CD4-positive, alpha-beta T cell (primary cell): ENCODE measurements at regions of chr2 and their contacts with region 1.

Region 1: GRCh38 chr2:157538064-157538463 is 90.6 kb downstream of the ACVR1C start:
- DNase-seq: no peak
- ATAC-seq: no peak
- H3K4me3 ChIP-seq: no peak overlapping the region
- H3K4me3 Mint-ChIP-seq: no peak overlapping the region
- H3K27ac ChIP-seq: no peak overlapping the region
- H3K27ac Mint-ChIP-seq: no peak overlapping the region
- H3K4me1 ChIP-seq: no peaks in the 10 kb centered on the region
- H3K4me1 Mint-ChIP-seq: no peaks in the 10 kb centered on the region
- H3K27me3 ChIP-seq: no peaks in the 10 kb centered on the region
- H3K27me3 Mint-ChIP-seq: no peaks in the 10 kb centered on the region
- CTCF ChIP-seq: no peak

Region 2: GRCh38 chr2:157587576-157587975 is 49.5 kb after region 1 on chr2:
- CTCF ChIA-PET with region 1: no interaction called
- POLR2A ChIA-PET with region 1: no interaction called
- intact Hi-C with region 1: loop called in 1 of 2 experiments (anchors 10 kb)
- DNase-seq: no peak
- ATAC-seq: no peak
- H3K4me3 ChIP-seq: no peak overlapping the region
- H3K4me3 Mint-ChIP-seq: no peak overlapping the region
- H3K27ac ChIP-seq: no peak overlapping the region
- H3K27ac Mint-ChIP-seq: no peak overlapping the region
- H3K4me1 ChIP-seq: no peaks in the 10 kb centered on the region
- H3K4me1 Mint-ChIP-seq: peaks cover under 1% of the 10 kb centered on the region
- H3K27me3 ChIP-seq: no peaks in the 10 kb centered on the region
- H3K27me3 Mint-ChIP-seq: no peaks in the 10 kb centered on the region
- CTCF ChIP-seq: no peak

Region 3: GRCh38 chr2:157620956-157621355 is 82.9 kb after region 1 on chr2:
- CTCF ChIA-PET with region 1: no interaction called
- POLR2A ChIA-PET with region 1: no interaction called
- intact Hi-C with region 1: no loop called
- DNase-seq: no peak
- ATAC-seq: no peak
- H3K4me3 ChIP-seq: no peak overlapping the region
- H3K4me3 Mint-ChIP-seq: no peak overlapping the region
- H3K27ac ChIP-seq: no peak overlapping the region
- H3K27ac Mint-ChIP-seq: no peak overlapping the region
- H3K4me1 ChIP-seq: peaks cover 8% of the 10 kb centered on the region
- H3K4me1 Mint-ChIP-seq: peaks cover 20% of the 10 kb centered on the region
- H3K27me3 ChIP-seq: no peaks in the 10 kb centered on the region
- H3K27me3 Mint-ChIP-seq: no peaks in the 10 kb centered on the region
- CTCF ChIP-seq: no peak

Region 4: DNA sequence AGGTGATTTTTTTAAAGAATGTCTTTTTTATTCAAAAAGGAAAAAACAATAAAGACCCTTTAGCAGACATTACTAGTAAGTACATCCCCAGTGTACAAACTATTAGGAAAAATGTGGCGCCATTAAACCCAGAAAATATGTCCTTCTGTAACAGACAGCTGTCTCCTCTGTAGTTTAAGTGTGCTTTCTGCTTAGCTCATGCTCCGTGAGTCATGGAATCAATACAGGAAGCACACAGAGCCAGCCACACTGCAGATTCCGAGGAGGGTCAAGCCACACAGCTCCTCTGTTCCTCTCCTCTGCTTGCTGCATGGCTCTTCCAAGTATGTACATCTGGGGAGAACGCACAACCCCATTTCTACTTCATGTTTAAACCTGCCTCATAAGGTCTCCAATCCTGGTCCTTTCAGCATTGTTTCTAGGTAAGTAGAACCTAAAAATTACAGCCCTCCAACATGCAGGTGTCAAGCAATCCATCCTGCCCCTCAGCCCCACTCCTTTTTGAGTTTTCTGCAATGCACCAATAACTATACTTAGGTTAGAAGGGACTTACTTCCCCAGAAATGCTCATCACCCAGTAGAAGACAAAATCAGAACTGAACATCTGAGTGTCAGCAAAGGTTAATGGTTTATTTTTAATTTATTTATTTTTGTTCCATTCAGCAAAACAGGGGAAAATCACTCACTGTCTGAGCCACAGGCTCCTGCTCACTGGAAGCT is 300.5 kb after region 1 on chr2:
- CTCF ChIA-PET with region 1: no interaction called
- POLR2A ChIA-PET with region 1: no interaction called
- intact Hi-C with region 1: no loop called
- DNase-seq: peak in 4 of 14 experiments; percentile 3 to 43 (median 40)
- ATAC-seq: no peak
- H3K4me3 ChIP-seq: no peak overlapping the region
- H3K4me3 Mint-ChIP-seq: peak overlapping the region; percentile 18
- H3K27ac ChIP-seq: no peak overlapping the region
- H3K27ac Mint-ChIP-seq: peak overlapping the region; percentile 29
- H3K4me1 ChIP-seq: peaks cover 7% of the 10 kb centered on the region
- H3K4me1 Mint-ChIP-seq: peaks cover 58% of the 10 kb centered on the region
- H3K27me3 ChIP-seq: no peaks in the 10 kb centered on the region
- H3K27me3 Mint-ChIP-seq: no peaks in the 10 kb centered on the region
- CTCF ChIP-seq: no peak